ENCODE measurements at regions of chr18 and their contacts with region 1.

Region 1: GRCh38 chr18:49834258-49834657 is 20.9 kb upstream of the ACAA2 start:
- DNase-seq: no peak
- ATAC-seq: no peak
- H3K4me3 ChIP-seq: no peak overlapping the region
- H3K27ac ChIP-seq: no peak overlapping the region
- H3K4me1 ChIP-seq: no peaks in the 10 kb centered on the region
- H3K27me3 ChIP-seq: no peaks in the 10 kb centered on the region
- CTCF ChIP-seq: no peak
- EP300 ChIP-seq: no peak
- POLR2A ChIP-seq: no peak
- RAD21 ChIP-seq: no peak

Region 2: DNA sequence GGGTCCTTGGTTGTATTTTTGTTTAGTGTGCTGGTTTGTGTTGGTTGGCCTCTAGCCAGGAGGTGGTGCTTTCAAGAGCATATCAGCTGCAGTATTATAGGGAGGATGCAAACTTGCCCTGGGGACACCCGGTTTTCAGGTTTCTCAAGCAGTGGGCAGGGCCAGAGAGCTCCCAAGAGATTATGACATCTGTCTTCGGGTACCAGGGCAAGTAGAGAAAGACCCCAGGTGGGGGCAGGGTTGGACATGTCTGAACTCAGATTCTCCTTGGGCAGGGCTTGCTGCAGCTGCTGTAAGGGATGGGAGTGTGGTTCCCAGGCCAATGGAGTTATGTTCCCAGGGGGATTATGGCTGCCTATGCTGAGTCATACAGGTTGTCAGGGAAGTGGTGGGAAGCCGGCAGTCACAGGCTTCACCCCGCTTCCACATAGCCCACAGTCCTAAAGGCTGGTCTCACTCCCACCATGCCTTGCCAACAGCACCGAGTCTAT is 55.2 kb before region 1 on chr18:
- CTCF ChIA-PET with region 1: no interaction called
- POLR2A ChIA-PET with region 1: interaction called, 10 read pairs
- RAD21 ChIA-PET with region 1: no interaction called
- SMC1A ChIA-PET with region 1: no interaction called
- in situ Hi-C with region 1: no loop called
- intact Hi-C with region 1: no loop called
- DNase-seq: peak; percentile 27
- ATAC-seq: no peak; the same call in 2 of the 3 replicates
- H3K4me3 ChIP-seq: no peak overlapping the region
- H3K27ac ChIP-seq: no peak overlapping the region
- H3K4me1 ChIP-seq: no peaks in the 10 kb centered on the region
- H3K27me3 ChIP-seq: no peaks in the 10 kb centered on the region
- CTCF ChIP-seq: no peak
- EP300 ChIP-seq: no peak
- POLR2A ChIP-seq: no peak
- RAD21 ChIP-seq: no peak

Region 3: GRCh38 chr18:49795612-49796552 is 38.4 kb before region 1 on chr18:
- CTCF ChIA-PET with region 1: no interaction called
- POLR2A ChIA-PET with region 1: no interaction called
- RAD21 ChIA-PET with region 1: no interaction called
- SMC1A ChIA-PET with region 1: no interaction called
- in situ Hi-C with region 1: no loop called
- intact Hi-C with region 1: no loop called
- DNase-seq: no peak
- ATAC-seq: no peak
- H3K4me3 ChIP-seq: no peak overlapping the region
- H3K27ac ChIP-seq: no peak overlapping the region
- H3K4me1 ChIP-seq: no peaks in the 10 kb centered on the region
- H3K27me3 ChIP-seq: no peaks in the 10 kb centered on the region
- CTCF ChIP-seq: no peak
- EP300 ChIP-seq: no peak
- POLR2A ChIP-seq: no peak
- RAD21 ChIP-seq: no peak

Region 4: DNA sequence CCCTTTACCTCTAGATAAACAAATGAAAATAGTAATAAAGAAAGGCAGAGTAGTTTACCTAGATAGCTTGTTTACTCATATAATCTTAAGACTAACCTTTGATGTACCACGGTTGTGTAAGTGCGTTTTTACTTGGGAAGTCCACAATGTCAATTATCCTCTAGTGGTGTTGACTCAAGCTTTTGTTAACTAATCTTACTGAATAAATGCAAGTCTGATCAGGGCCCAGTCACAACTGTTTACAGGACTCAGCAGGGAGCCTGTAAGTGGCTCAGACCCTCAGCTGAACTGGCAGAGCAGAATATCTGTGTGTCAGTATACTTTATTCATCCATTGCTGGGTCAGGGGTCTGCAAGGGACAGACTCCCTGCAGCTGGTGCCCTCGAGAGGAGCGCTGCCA is 77.2 kb after region 1 on chr18:
- CTCF ChIA-PET with region 1: no interaction called
- POLR2A ChIA-PET with region 1: no interaction called
- RAD21 ChIA-PET with region 1: no interaction called
- SMC1A ChIA-PET with region 1: no interaction called
- in situ Hi-C with region 1: no loop called
- intact Hi-C with region 1: no loop called
- DNase-seq: no peak
- ATAC-seq: no peak
- H3K4me3 ChIP-seq: no peak overlapping the region
- H3K27ac ChIP-seq: no peak overlapping the region
- H3K4me1 ChIP-seq: no peaks in the 10 kb centered on the region
- H3K27me3 ChIP-seq: peaks cover 0 to 3% of the 10 kb centered on the region in 2 experiments; a peak in 1 of 4 replicates
- CTCF ChIP-seq: no peak
- EP300 ChIP-seq: no peak
- POLR2A ChIP-seq: no peak
- RAD21 ChIP-seq: no peak

Measured in GM12878 (cell line).